Posterior vena cava (tissue), 2 donors: ENCODE measurements at regions of chr20 and their contacts with region 1.

Region 1: GRCh38 chr20:23967253-23967979 is 21.2 kb downstream of the GGTLC1 start:
- DNase-seq: no peak

Region 2: DNA sequence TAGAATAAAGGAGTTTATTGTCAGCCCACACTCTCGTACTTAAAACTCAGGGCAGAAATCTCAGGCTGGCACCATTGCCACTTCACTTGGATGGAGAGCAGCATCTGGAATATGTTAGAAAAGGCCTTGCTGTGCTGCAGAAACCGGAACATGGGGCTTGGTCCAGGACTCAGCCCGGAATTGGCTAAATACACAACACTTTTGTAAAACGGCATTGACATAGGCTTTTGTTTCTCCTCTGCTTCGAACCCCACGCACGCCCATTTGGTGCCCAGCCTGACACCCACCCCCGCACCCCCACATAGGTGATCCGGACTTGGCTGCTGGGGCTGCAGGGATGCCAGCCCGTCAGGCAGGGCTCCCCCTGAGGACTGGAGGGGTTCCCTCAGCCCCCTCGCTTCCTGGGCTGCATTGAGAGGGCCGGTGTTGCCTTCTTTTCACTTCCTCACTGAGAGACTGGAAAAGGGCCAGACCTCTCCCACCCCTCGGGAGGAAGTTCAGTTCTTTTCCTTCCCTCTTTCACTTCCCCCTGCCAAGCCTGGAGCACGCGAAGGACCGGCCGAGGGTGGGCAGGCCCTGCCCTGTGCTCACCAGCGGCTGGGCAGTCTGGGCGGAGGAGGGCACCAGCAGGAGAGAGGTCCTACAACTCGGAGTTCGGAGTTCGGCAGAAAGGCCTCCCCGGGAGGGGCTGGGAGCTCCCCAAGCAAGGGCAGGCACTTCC is 311.8 kb before region 1 on chr20:
- intact Hi-C with region 1: loop called in 1 of 2 experiments (anchors 2 kb)
- DNase-seq: peak; percentile 91